ENCODE measurements at regions of chr10 and their contacts with region 1.

Region 1: GRCh38 chr10:72126184-72126871 is 38.0 kb upstream of the SPOCK2 start:
- DNase-seq: peak; percentile 58
- ATAC-seq: peak; percentile 43
- H3K4me3 ChIP-seq: no peak overlapping the region
- H3K27ac ChIP-seq: no peak overlapping the region
- H3K4me1 ChIP-seq: no peaks in the 10 kb centered on the region
- H3K27me3 ChIP-seq: no peaks in the 10 kb centered on the region
- CTCF ChIP-seq: peak; percentile 63

Region 2: DNA sequence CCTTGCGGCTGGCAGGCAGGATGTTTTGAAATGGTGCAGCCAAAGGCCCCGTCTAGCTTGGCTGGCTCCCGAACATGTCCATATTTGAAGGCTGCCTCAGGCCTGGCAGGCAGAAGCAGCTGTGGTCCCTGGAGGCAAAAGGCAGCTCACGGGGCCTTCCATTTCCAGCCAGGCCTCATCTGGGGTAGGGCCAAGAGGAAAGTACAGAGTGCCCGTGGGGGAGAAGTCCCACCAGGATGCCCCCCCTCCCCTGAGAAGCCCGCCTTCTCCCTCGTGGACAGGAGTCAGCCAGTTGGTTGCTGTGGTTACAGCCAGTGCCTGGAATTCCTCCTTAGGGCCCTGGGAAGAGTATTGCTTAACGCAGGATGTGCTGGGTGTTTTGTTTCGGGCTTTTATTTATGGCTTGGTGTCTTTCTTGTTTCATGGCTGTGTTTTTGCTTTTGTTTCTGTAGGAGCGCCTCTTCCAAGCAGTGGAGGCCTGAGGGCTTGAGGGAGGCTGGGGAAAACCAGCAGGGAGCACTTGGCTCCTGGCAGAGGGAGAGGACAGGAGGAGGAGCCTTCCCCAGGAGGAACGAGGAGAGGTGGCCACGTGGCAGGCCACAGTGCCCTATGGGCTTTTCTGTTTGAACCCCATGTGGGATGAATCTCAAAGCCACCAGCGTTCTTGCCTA is 116.8 kb before region 1 on chr10:
- CTCF ChIA-PET with region 1: no interaction called
- POLR2A ChIA-PET with region 1: no interaction called
- intact Hi-C with region 1: no loop called
- DNase-seq: no peak
- ATAC-seq: no peak
- H3K4me3 ChIP-seq: no peak overlapping the region
- H3K27ac ChIP-seq: no peak overlapping the region
- H3K4me1 ChIP-seq: no peaks in the 10 kb centered on the region
- H3K27me3 ChIP-seq: no peaks in the 10 kb centered on the region
- CTCF ChIP-seq: no peak

Region 3: DNA sequence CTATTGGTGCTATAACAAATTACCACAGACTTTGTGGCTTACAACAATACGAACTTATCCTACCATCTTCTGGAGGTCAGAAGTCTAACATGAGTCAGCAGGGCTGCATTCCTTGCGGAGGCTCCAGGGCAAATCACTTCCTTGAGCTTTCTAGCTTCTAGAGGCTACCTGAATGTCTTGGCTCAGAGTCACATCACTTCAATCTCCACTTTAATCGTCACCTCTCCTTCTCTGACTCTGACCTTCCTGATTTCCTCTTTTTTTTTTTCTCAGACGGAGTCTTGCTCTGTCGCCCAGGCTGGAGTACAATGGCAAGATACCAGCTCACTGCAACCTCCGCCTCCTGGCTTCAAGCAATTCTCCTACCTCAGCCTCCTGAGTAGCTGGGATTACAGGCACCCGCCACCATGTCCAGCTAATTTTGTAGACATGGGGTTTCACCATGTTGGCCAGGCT is 44.9 kb after region 1 on chr10:
- CTCF ChIA-PET with region 1: no interaction called
- POLR2A ChIA-PET with region 1: no interaction called
- intact Hi-C with region 1: loop called (anchors 1 kb)
- DNase-seq: peak; percentile 93
- ATAC-seq: peak; percentile 98
- H3K4me3 ChIP-seq: no peak overlapping the region
- H3K27ac ChIP-seq: peak overlapping the region; percentile 53
- H3K4me1 ChIP-seq: peaks cover 22% of the 10 kb centered on the region
- H3K27me3 ChIP-seq: no peaks in the 10 kb centered on the region
- CTCF ChIP-seq: no peak

Region 4: DNA sequence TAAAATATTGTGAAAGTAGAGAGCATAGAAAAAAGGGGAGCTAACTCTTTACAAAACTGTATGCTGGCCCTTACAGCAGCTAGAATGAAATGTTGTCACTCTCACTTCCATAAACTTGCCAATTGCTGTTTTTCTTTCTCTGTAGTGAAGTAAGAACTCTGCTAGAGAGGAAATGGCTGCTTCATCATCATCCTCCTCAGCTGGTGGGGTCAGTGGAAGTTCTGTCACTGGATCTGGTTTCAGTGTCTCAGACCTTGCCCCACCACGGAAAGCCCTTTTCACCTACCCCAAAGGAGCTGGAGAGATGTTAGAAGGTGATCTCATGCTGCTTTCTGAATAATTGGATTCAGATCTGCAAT is 97.4 kb after region 1 on chr10:
- CTCF ChIA-PET with region 1: interaction called, 4 read pairs
- POLR2A ChIA-PET with region 1: no interaction called
- intact Hi-C with region 1: loop called (anchors 5 kb)
- DNase-seq: no peak
- ATAC-seq: no peak
- H3K4me3 ChIP-seq: no peak overlapping the region
- H3K27ac ChIP-seq: no peak overlapping the region
- H3K4me1 ChIP-seq: no peaks in the 10 kb centered on the region
- H3K27me3 ChIP-seq: no peaks in the 10 kb centered on the region
- CTCF ChIP-seq: no peak

Measured in PC-3 (cell line).